ENCODE measurements at regions of chr10 and their contacts with region 1.

Region 1: GRCh38 chr10:114548662-114549061 is 109.4 kb downstream of the ABLIM1 start:
- DNase-seq: peak in 1 of 42 donors; percentile 42

Region 2: DNA sequence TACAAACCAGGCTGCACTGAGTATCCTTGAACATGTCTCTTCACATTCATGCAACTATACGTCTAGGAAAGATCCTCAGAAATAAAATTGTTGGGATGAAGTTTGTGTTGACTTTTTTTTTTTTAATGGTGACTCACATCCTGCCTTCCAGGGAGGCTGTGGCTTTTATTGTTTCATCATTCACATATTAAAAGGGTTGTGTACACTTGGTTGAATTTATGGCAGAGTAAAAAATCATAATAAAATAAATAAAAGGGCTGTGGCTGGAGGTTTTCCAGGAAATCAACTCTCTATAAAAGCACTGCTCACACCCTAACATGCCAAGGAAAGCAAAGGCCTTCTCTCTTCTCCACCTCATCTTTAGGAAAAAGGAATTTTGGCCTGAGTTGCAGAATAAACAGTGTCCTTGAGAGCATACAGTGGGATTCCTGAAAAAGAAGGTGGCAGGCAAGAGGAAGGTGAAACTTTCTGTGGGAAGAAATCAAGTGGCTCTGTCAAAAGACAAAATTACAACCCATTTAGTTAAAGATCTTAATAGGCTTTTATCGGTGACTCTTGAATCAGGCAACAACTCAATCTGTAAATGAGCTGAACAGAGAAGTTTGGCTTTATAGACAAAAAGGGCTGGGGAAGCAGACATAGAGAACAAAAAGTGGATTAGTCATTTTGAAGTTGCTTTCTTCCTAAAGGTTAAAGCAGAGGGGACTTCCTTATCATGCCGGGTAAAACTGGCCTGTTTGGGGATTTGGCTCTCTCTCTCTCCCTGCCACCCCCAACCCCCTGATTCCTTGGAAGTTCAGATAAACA is 231.3 kb after region 1 on chr10:
- intact Hi-C with region 1: loop called (anchors 10 kb)
- DNase-seq: no peak